ENCODE measurements at regions of chr1 and their contacts with region 1.

Region 1: DNA sequence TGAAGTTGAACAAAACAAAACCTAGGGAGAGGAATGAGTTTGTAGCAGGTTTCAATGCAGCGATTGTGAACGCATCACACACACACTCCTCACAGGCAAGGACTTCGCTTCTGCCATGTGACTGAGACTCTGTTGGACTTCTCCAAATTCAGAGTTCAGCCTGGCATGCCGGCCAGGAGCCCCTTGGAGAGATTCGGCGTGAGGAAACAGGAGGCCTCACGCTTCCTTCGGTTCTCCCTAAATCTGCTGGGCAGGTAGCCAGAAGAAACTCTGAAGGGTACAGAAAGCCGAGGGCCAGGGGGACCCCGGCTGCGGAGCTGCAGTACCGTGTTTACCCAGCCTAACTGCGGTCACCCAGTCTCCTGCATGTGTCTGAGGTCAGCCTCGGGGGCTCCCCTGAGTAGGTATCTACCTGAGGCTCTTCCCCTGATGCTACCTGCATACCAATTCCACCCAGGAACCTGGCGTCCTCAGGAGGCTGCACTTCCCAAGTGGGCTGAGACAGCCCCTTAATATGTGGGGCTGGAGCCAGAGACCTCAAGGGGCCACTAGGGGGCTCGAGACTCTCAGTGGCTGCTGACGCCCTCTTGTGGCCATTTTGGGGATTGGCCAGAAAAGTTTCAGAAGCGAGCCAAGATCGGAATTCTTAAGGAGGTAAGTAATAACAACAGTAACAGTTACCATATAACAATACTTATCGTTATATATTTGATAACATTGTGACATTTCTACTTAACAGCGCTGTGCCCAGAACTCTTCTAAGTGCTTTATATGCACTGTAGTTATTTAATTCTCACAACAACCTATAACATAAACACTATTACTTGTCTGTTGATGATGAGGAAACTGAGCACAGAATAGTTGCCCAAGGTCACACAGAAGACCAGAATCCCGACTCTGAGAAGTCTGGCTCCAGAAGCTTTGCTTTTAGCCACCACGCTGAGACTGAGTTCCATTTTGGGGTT is 2.7 kb upstream of the ANXA9 start:
- DNase-seq: peak; percentile 81 to 94 (median 88)
- ATAC-seq: peak; percentile 55
- H3K4me3 ChIP-seq: peak overlapping the region; percentile 41
- H3K4me3 Mint-ChIP-seq: peak overlapping the region; percentile 75
- H3K27ac ChIP-seq: no peak overlapping the region
- H3K27ac Mint-ChIP-seq: peak overlapping the region; percentile 59
- H3K4me1 ChIP-seq: peaks cover 45% of the 10 kb centered on the region
- H3K4me1 Mint-ChIP-seq: peaks cover 40% of the 10 kb centered on the region
- H3K27me3 ChIP-seq: no peaks in the 10 kb centered on the region
- H3K27me3 Mint-ChIP-seq: no peaks in the 10 kb centered on the region
- CTCF ChIP-seq: peak; percentile 100

Region 2: GRCh38 chr1:150995896-150996295 is 16.5 kb after region 1 on chr1:
- CTCF ChIA-PET with region 1: interaction called, 15 read pairs
- POLR2A ChIA-PET with region 1: interaction called, 3 read pairs
- intact Hi-C with region 1: loop called in 1 of 2 experiments (anchors 2 kb)
- DNase-seq: peak in 6 of 14 experiments; percentile 15 to 65 (median 42)
- ATAC-seq: peak; percentile 60
- H3K4me3 ChIP-seq: no peak overlapping the region
- H3K4me3 Mint-ChIP-seq: no peak overlapping the region
- H3K27ac ChIP-seq: peak overlapping the region in 1 of 2 donors; percentile 26
- H3K27ac Mint-ChIP-seq: peak overlapping the region; percentile 65
- H3K4me1 ChIP-seq: peaks cover 27% of the 10 kb centered on the region
- H3K4me1 Mint-ChIP-seq: peaks cover 16% of the 10 kb centered on the region
- H3K27me3 ChIP-seq: no peaks in the 10 kb centered on the region
- H3K27me3 Mint-ChIP-seq: no peaks in the 10 kb centered on the region
- CTCF ChIP-seq: peak; percentile 96

Region 3: DNA sequence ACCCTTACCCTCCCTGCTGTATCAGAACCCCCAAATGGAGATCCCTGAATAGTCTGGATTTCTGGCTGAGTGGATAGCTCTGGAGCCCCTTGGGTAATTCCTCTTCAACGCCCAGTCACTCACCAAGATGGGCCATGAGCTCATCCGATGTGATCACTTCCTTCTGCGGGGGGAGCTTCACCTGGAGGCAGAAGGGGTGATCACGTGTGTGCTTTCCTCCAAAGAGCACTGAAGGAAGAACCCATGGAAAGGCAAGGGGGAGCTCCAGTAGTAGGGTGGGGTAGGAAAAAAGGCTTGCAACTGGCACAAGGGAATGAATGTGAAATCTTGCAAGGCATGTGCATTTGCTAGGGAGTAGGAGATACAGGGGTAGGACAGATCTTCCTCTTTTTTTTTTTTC is 22.2 kb after region 1 on chr1:
- CTCF ChIA-PET with region 1: interaction called, 15 read pairs
- POLR2A ChIA-PET with region 1: interaction called, 11 read pairs
- intact Hi-C with region 1: loop called in 1 of 2 experiments (anchors 2 kb)
- DNase-seq: peak in 1 of 14 experiments; percentile 32
- ATAC-seq: no peak
- H3K4me3 ChIP-seq: no peak overlapping the region
- H3K4me3 Mint-ChIP-seq: peak overlapping the region; percentile 93
- H3K27ac ChIP-seq: no peak overlapping the region
- H3K27ac Mint-ChIP-seq: peak overlapping the region; percentile 98
- H3K4me1 ChIP-seq: peaks cover 72% of the 10 kb centered on the region
- H3K4me1 Mint-ChIP-seq: peaks cover 59% of the 10 kb centered on the region
- H3K27me3 ChIP-seq: no peaks in the 10 kb centered on the region
- H3K27me3 Mint-ChIP-seq: no peaks in the 10 kb centered on the region
- CTCF ChIP-seq: no peak

Region 4: DNA sequence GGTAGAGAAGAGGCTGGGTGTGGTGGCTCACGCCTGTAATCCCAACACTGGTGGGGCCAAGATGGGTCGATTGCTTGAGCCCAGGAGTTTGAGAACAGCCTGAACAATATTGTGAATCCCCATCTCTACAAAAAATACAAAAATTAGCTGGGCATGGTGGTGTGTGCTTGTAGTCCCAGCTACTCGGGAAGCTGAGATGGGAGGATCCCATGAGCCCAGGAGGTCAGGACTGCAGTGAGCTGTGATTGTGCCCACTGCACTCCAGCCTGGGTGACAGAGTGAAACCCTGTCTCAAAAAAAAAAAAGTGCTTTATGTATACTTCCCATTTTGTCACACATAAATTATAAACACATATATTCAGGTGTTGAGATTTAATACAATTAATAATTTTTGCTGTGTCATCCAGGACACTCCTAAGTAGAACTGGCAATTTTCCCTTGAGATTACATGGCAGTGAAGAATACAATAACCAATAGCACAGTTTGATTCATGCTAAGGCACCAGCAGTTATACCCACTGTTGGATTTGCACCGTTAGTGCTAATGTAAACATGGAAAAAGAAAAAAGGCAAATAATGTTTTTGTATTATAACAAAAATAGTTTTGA is 106.7 kb after region 1 on chr1:
- CTCF ChIA-PET with region 1: no interaction called
- POLR2A ChIA-PET with region 1: no interaction called
- intact Hi-C with region 1: no loop called
- DNase-seq: no peak
- ATAC-seq: no peak
- H3K4me3 ChIP-seq: no peak overlapping the region
- H3K4me3 Mint-ChIP-seq: no peak overlapping the region
- H3K27ac ChIP-seq: no peak overlapping the region
- H3K27ac Mint-ChIP-seq: no peak overlapping the region
- H3K4me1 ChIP-seq: no peaks in the 10 kb centered on the region
- H3K4me1 Mint-ChIP-seq: no peaks in the 10 kb centered on the region
- H3K27me3 ChIP-seq: no peaks in the 10 kb centered on the region
- H3K27me3 Mint-ChIP-seq: no peaks in the 10 kb centered on the region
- CTCF ChIP-seq: no peak

Measured in CD4-positive, alpha-beta T cell (primary cell).